Ascending aorta (tissue), 2 donors: ENCODE measurements at regions of chr15 and their contacts with region 1.

Region 1: GRCh38 chr15:68365140-68365745 is 66.7 kb downstream of the ITGA11 start:
- DNase-seq: no peak
- H3K4me3 ChIP-seq: no peak overlapping the region
- H3K27ac ChIP-seq: peak overlapping the region; percentile 96
- H3K4me1 ChIP-seq: peaks cover 25 to 71% of the 10 kb centered on the region in 2 donors
- H3K27me3 ChIP-seq: no peaks in the 10 kb centered on the region
- CTCF ChIP-seq: no peak

Region 2: DNA sequence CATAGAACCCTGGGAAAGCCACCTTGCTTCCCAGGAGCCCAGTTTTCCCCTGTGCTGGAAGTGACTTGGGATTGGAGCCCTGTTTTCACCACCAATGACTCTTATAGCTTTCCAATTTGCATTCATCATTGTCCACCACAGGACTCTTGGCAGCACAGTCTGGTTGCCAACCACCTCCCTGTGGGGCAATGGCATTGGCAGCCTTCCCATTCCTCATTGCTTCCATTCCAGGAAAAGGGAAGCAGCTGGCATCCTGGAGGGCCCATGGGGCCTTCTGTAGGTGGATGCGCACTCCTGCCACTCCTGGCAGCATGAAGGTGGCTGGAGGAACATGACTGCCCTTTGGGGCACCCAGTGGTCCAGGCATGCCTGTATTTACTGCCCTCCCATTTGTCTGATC is 30.0 kb before region 1 on chr15:
- intact Hi-C with region 1: loop called (anchors 1 kb)
- DNase-seq: peak; percentile 53 to 94
- H3K4me3 ChIP-seq: no peak overlapping the region
- H3K27ac ChIP-seq: peak overlapping the region; percentile 96 to 98
- H3K4me1 ChIP-seq: peaks cover 29 to 59% of the 10 kb centered on the region in 2 donors
- H3K27me3 ChIP-seq: no peaks in the 10 kb centered on the region
- CTCF ChIP-seq: no peak

Region 3: DNA sequence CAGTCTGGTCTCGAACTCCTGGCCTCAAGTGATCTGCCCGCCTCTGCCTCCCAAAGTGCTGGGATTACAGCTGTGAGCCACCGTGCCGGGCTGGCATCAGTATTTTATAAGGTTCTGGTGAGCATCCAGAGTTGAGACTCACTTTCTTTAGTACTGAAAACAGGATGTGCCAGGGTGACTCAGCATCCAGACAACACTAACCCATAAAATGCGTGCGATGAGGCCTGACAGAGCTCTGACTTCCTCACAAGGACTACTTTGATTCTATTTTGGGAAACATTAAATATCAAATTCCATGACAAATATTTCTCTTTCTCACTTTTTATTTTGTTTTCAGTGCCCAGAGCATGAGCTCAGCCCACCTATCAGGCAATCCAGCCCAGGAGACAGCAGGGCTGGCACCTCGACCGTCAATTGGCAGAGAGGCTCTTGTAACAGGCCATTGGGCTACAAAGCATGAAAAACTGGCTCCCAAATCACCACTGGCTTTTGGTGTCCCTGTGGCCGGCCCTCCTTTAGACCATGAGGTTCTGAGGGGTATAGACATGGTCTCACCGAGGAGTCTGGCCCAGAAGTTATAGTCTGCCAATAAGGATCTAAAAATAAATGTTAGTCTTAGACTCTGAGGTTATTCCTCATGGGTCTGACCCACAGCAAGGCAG is 12.7 kb before region 1 on chr15:
- intact Hi-C with region 1: loop called (anchors 2 kb)
- DNase-seq: peak; percentile 81 to 96
- H3K4me3 ChIP-seq: no peak overlapping the region
- H3K27ac ChIP-seq: peak overlapping the region; percentile 96 to 98
- H3K4me1 ChIP-seq: peaks cover 18 to 62% of the 10 kb centered on the region in 2 donors
- H3K27me3 ChIP-seq: no peaks in the 10 kb centered on the region
- CTCF ChIP-seq: no peak

Region 4: DNA sequence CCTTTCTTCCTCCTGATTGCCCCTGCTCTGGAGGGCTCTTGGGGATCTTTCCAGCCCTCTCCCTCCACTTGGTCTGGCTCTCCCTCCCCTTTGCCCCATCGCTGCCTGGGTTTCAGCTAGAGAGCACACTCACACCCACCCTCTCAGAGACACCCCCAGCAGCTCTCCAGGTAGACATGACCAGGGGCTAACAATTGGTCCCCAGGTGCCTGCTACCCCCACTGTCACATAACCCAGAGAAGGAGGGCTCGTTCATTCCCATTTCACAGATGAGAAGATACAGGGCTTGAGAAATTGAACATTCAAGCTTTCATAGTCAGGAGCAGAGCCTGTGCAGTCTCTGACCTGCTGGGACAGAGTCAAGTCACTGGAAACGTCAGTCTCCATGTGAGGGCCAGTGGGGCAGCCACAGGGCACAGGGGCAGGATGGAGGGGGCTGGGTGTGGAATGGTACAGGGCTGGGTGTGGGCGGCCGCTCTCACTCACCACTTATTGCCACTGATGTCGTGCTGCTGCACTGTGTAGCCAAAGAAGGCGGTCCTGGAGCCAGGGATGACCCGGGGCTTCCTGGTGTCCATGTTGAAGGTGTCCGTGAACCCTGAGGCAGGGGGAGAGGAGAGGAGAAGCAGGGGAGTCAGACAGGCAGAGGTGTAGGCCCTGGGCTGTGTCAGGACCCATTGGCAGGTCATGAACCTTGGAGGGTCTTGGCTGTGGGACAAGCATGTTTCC is 37.4 kb after region 1 on chr15:
- intact Hi-C with region 1: no loop called
- DNase-seq: peak in 1 of 2 donors; percentile 62
- H3K4me3 ChIP-seq: no peak overlapping the region
- H3K27ac ChIP-seq: peak overlapping the region; percentile 15 to 49
- H3K4me1 ChIP-seq: peaks cover 2 to 14% of the 10 kb centered on the region in 2 donors
- H3K27me3 ChIP-seq: no peaks in the 10 kb centered on the region
- CTCF ChIP-seq: no peak

Region 5: DNA sequence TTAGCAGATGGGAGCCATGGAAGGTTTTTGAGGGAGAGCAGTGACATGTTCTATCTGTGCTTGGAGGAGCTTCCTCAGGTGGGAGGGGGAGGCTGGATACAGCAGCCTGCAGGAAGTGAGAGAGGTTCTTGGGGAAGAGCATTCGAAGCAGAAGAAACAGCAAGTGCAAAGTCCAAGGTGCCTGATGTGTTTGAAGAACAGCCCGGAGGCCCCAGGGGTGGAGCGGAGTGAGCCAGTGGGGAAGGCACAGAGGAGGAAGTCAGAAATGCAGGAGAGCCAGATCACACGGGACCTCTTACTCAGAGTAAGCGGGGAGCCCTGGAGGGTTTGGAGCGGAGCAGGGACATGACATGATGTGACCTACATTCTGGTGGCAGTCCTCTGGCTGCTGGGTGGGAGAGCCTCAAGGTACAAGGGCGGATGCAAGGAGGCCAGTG is 55.9 kb after region 1 on chr15:
- intact Hi-C with region 1: loop called (anchors 5 kb)
- DNase-seq: peak in 1 of 2 donors; percentile 63
- H3K4me3 ChIP-seq: no peak overlapping the region
- H3K27ac ChIP-seq: peak overlapping the region; percentile 68 to 70
- H3K4me1 ChIP-seq: peaks cover 10 to 46% of the 10 kb centered on the region in 2 donors
- H3K27me3 ChIP-seq: no peaks in the 10 kb centered on the region
- CTCF ChIP-seq: no peak

Region 6: GRCh38 chr15:68447209-68447608 is 82.0 kb after region 1 on chr15:
- intact Hi-C with region 1: no loop called
- DNase-seq: no peak
- H3K4me3 ChIP-seq: no peak overlapping the region
- H3K27ac ChIP-seq: no peak overlapping the region
- H3K4me1 ChIP-seq: no peaks in the 10 kb centered on the region
- H3K27me3 ChIP-seq: no peaks in the 10 kb centered on the region
- CTCF ChIP-seq: no peak

Region 7: DNA sequence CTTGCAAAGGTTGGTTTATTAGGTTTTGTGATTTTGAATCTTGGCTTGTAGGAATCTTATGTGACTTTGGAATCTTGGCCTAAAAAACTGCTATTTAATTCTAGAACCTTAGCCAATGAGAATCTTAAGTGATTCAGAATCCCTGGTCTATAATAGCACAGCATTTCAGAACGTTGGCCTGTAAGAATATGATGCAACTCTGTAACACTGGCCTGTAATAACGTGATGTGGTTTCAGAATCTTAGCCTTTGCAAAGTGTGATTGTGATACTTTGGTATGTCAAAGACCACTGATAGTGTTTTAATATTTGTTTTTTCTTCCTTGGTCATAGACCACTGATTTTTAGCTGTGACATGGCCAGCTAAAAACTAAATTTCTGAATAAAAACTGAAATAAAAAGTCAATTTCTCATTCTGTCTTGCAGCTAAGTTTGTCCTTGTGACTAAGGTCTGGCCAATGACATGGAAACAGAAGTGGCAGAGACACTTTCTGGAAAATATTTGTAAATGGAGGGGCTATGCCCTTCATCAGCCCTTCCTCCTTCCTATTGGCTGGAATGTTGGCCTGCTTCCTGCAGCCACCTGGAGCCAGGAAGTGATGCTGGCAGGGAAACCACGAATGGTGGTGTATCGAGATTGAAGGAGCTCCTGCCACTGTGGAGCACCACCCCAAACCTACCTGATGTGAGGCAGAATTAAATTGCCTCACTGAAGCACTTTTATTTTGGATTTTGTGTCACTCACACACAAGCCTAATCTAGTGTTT is 171.3 kb after region 1 on chr15:
- intact Hi-C with region 1: loop called (anchors 5 kb)
- DNase-seq: no peak
- H3K4me3 ChIP-seq: peak overlapping the region in 1 of 2 donors; percentile 16
- H3K27ac ChIP-seq: peak overlapping the region; percentile 79 to 92
- H3K4me1 ChIP-seq: peaks cover 0 to 18% of the 10 kb centered on the region in 2 donors
- H3K27me3 ChIP-seq: no peaks in the 10 kb centered on the region
- CTCF ChIP-seq: no peak